ENCODE measurements at regions of chr1 and their contacts with region 1.

Region 1: DNA sequence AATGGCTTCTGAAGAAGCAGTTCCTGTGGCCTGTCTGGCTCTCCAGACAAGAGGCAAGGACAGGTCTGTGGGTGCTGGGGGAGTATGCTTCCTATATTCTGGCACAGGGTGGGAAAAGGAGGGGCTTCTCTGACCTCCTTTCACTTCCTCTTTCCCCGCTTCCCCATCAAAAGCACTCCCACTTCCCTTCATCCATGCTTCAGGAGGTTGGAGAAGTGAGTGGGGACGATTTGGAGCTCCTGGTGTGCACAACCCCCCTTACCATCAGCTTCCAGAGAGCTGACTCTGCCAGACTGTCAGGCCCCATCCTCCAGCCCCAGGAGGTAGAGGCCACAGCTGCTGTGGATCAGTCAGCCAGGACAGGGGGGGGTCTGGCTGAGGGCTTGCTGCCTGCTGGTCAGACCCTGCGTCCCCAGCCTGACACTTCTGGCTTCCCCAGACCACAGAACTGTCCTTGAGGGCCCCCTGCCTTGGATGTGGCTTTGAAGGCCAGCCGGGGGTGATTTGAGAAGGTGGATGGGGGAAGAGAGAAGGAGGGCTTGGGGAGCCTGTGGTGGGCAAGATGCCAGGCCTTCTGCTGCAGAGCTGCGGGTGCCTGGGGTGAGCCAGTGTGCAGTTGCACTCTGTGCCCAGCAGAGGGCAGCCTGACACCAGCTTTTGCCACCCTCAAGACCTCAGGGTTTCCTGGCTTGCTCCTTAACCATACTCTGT is 21.5 kb upstream of the TMEM222 start:
- DNase-seq: peak; percentile 77
- ATAC-seq: peak; percentile 97
- H3K4me3 Mint-ChIP-seq: no peak overlapping the region
- H3K27ac Mint-ChIP-seq: no peak overlapping the region
- H3K4me1 Mint-ChIP-seq: peaks cover 4% of the 10 kb centered on the region
- H3K27me3 Mint-ChIP-seq: no peaks in the 10 kb centered on the region
- CTCF ChIP-seq: peak; percentile 99

Region 2: GRCh38 chr1:27044613-27045151 is 255.8 kb before region 1 on chr1:
- CTCF ChIA-PET with region 1: interaction called, 15 read pairs
- POLR2A ChIA-PET with region 1: interaction called, 3 read pairs
- intact Hi-C with region 1: no loop called
- DNase-seq: peak; percentile 94
- ATAC-seq: peak; percentile 96
- H3K4me3 Mint-ChIP-seq: peak overlapping the region; percentile 39
- H3K27ac Mint-ChIP-seq: no peak overlapping the region
- H3K4me1 Mint-ChIP-seq: peaks cover 15% of the 10 kb centered on the region
- H3K27me3 Mint-ChIP-seq: no peaks in the 10 kb centered on the region
- CTCF ChIP-seq: peak; percentile 92

Region 3: DNA sequence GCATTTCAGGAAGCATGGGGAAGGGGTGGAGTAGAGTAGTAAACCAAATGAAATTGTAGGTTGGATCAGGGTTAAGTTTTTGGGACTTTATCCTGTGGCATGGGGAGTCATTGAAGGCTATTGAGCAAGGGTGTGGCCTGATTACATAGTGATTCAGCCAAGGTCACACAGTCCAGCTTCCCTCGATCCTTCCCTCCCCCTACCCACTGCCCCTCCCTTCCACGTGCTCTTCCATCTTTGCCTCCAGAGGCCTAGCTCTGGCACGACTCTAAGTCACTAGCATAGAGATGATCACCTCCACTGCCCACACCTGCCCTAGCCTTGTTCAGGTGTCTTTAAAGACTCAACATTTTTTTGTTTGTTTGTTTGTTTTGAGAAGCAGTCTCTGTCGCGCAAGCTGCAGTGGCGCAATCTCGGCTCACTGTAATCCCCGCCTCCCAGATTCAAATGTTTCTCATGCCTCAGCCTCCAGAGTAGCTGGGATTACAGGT is 108.4 kb before region 1 on chr1:
- CTCF ChIA-PET with region 1: interaction called, 16 read pairs
- POLR2A ChIA-PET with region 1: no interaction called
- intact Hi-C with region 1: no loop called
- DNase-seq: no peak
- ATAC-seq: no peak
- H3K4me3 Mint-ChIP-seq: no peak overlapping the region
- H3K27ac Mint-ChIP-seq: no peak overlapping the region
- H3K4me1 Mint-ChIP-seq: no peaks in the 10 kb centered on the region
- H3K27me3 Mint-ChIP-seq: no peaks in the 10 kb centered on the region
- CTCF ChIP-seq: no peak

Region 4: DNA sequence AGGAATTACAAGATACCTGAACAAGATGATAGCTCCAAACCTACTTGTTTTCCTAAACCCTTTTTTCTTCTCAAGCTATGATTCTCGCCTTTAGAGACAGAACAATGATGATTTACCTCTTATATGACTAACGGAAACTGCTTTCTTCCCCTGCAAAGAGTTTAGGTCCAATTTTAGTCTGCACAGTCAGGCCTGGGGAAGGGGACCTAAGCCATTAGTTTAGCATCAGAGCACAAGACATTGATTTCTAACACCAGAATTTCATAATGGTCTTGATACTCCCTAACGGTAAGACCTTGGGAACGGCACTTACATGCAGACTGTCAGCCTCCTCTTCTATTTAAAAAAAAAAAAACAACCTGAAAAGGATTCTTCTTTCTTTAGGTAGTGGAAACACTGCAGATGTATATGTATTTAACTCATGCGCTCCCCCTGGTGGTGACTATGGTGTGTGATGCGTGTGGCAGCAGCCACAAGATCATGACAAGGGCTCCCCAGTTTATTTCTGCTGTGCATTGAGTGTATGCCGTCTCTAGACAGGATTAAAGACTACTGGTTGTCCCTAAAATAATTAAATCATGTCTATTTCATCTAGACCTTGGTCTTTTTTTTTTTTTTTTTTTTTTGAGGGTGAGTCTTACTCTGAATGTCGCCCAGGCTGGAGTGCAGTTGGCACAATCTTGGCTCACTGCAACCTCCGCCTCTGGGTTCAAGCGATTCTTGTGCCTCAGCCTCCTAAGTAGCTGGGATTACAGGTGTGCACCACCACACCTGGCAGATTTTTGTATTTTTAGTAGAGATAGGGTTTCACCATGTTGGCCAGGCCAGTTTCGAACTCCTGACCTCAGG is 15.8 kb before region 1 on chr1:
- CTCF ChIA-PET with region 1: interaction called, 91 read pairs
- POLR2A ChIA-PET with region 1: interaction called, 3 read pairs
- intact Hi-C with region 1: no loop called
- DNase-seq: peak; percentile 97
- ATAC-seq: peak; percentile 96
- H3K4me3 Mint-ChIP-seq: no peak overlapping the region
- H3K27ac Mint-ChIP-seq: no peak overlapping the region
- H3K4me1 Mint-ChIP-seq: no peaks in the 10 kb centered on the region
- H3K27me3 Mint-ChIP-seq: no peaks in the 10 kb centered on the region
- CTCF ChIP-seq: peak; percentile 88

Region 5: GRCh38 chr1:27332536-27333281 is 32.2 kb after region 1 on chr1:
- CTCF ChIA-PET with region 1: interaction called, 48 read pairs
- POLR2A ChIA-PET with region 1: interaction called, 3 read pairs
- intact Hi-C with region 1: no loop called
- DNase-seq: peak; percentile 73
- ATAC-seq: peak; percentile 91
- H3K4me3 Mint-ChIP-seq: no peak overlapping the region
- H3K27ac Mint-ChIP-seq: no peak overlapping the region
- H3K4me1 Mint-ChIP-seq: peaks cover 27% of the 10 kb centered on the region
- H3K27me3 Mint-ChIP-seq: no peaks in the 10 kb centered on the region
- CTCF ChIP-seq: peak; percentile 94

Region 6: GRCh38 chr1:27372808-27373690 is 72.6 kb after region 1 on chr1:
- CTCF ChIA-PET with region 1: interaction called, 11 read pairs
- POLR2A ChIA-PET with region 1: no interaction called
- intact Hi-C with region 1: no loop called
- DNase-seq: no peak
- ATAC-seq: no peak
- H3K4me3 Mint-ChIP-seq: no peak overlapping the region
- H3K27ac Mint-ChIP-seq: no peak overlapping the region
- H3K4me1 Mint-ChIP-seq: peaks cover 8% of the 10 kb centered on the region
- H3K27me3 Mint-ChIP-seq: no peaks in the 10 kb centered on the region
- CTCF ChIP-seq: no peak